Ascending aorta (tissue), 2 donors: ENCODE measurements at regions of chr10 and their contacts with region 1.

Region 1: DNA sequence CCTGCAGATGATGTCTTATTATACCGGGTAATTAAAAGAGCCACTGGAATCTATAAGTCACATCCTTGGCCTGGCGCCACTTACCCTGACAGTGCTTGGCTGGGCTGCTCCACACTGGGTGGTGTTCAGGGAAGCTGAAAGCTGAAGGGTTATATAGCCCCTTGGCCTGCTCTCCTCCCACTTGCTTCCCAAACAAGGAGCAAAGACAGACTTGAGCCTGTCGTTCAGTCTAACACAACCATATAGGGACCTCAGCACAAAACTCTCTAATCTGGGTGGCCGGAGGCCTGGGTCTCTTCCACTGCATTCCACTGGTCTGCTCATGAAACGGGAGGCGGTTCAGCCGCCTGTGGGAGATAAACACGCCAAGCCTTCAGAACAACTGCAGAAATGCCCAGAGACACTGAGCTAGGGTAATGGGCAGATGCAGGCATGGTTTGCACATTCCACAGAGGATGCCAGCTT is at the start of gene ACTA2:
- DNase-seq: peak; percentile 58 to 93
- H3K4me3 ChIP-seq: peak within 1 kb of the TSS; percentile 51 to 84
- H3K27ac ChIP-seq: peak within 1 kb of the TSS; percentile 75 to 89
- H3K4me1 ChIP-seq: peaks cover 0 to 19% of the 10 kb centered on the region in 2 donors
- H3K27me3 ChIP-seq: no peaks in the 10 kb centered on the region
- CTCF ChIP-seq: no peak
- total RNA-seq, gene ACTA2: 5,316 TPM

Region 2: DNA sequence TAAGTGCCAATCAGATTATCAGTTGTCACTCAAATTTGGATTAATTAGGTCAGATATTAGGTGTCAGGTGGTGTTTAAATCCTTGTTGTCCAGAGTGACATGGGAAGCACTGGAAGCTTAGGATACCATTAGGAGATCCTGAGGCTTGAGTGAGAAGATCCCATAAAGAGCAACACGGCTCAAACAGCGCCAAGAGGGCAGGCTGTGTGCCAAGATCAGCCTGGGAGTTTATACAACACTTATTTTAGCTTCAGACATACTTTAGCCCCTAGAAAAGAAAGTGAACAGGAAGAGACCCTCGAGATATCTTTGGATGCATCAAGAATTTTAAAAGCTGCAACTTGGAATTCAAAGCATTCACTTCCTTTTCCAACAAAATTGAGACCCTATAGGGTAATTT is 14.1 kb after region 1 on chr10:
- intact Hi-C with region 1: loop called (anchors 1 kb)
- DNase-seq: no peak
- H3K4me3 ChIP-seq: peak overlapping the region in 1 of 2 donors; percentile 9
- H3K27ac ChIP-seq: peak overlapping the region; percentile 87 to 89
- H3K4me1 ChIP-seq: peaks cover 0 to 44% of the 10 kb centered on the region in 2 donors
- H3K27me3 ChIP-seq: no peaks in the 10 kb centered on the region
- CTCF ChIP-seq: no peak

Region 3: DNA sequence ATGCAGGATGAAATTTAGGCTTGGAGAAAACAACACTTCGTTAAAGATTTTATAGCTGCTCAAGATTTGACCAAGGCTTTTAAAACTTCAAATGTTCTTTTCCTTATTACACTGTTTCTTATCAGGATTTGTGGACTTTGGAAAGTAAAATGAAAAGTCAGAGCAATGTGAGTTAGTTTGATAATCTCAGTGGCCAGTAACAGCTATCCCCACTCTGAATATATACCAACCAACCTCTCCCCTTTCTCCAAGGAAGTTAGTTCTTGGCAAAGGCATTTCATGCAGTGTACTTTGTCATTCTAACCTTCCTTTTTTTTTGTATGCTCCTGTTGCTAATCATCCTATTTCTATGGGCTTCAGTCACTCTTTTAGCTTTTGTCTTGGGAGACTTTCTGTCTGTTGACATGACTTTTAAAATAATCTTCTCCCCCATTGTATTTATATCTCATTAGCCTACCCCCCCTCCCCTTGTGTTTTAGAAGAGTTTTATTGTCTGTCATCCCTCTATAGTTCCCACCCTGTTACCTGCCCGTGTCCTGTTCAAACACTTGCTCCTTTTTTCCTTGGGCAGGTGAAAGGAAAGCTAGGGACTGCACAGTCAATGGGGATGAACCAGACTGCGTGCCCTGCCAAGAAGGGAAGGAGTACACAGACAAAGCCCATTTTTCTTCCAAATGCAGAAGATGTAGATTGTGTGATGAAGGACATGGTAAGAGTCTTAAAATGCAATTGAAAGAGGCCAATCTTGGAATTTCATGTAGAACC is 54.6 kb after region 1 on chr10:
- intact Hi-C with region 1: no loop called
- DNase-seq: no peak
- H3K4me3 ChIP-seq: no peak overlapping the region
- H3K27ac ChIP-seq: no peak overlapping the region
- H3K4me1 ChIP-seq: no peaks in the 10 kb centered on the region
- H3K27me3 ChIP-seq: no peaks in the 10 kb centered on the region
- CTCF ChIP-seq: no peak